Lower leg skin (tissue), 4 donors: ENCODE measurements at regions of chr14 and their contacts with region 1.

Region 1: DNA sequence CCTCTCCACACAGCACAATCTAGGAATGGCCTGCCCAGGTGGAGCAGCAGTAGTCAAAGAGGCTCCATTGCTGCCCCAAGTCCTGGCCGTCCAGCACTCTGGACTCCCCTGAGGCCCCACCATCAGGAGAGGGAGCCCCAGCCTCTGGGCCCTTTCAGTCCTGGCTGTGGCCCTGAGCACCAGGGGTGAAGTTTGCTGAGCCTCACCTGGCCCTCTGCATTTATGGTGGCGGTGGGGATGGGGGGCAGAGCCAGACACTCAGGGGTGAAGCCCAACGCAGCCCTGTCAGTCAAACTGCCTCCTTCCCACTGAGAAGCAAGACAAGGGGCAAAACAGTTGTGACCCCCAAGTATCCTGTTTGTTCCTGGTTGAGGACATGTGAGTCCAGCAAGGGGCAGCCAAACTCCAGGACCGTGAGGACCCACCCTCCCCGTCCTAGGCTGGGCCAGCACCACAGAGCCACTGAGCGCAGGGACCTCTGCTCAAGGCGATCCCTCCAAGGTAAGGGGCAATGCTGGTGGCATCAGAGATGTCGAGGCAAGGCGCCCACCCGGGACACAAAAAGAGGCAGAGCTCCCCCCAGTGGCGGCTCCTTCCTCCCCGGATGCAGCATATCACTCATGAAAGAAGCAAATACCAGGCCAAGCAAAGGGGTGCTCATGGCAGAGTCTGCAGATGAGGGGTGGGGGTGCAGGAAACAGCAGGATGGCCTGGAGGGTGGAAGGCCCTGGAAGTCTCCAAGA is 4.8 kb upstream of the AMN start:
- DNase-seq: no peak
- H3K4me3 ChIP-seq: no peak overlapping the region
- CTCF ChIP-seq: no peak
- POLR2A ChIP-seq: no peak

Region 2: DNA sequence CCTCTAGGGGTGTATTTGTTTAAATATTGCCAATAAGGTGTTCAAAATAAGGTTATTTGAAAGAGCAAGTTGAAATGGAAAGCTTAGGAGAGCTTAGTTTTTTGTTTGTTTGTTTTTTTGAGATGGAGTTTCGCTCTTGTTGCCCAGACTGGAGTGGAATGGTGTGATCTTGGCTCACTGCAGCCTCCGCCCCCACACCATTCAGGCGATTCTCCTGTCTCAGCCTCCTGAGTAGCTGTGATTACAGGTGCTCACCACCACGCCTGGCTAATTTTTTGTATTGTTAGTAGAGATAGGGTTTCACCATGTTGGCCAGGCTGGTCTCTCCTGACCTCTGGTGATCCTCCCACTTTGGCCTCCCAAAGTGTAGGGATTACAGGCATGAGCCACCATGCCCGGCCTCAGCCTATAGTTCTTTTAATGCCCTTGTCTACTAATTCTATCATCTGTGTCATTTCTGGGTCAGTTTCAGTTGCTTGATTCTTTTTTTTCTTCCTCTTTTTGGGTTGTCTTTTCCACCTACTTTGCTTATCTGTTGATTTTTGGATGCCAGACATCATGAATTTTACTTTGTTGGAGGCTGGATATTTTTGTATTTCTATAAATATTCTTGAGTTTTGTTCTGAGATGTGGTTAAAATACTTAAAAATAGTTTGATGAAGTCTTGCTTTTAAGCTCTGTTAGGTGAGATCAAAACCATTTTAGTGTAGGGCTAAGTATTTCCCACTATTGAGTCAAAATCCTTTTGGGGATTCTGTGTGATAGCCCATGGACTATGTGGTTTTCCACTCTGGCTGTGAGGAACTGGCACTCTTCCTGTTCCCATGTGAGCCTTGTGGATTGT is 306.4 kb before region 1 on chr14:
- intact Hi-C with region 1: loop called (anchors 10 kb)
- DNase-seq: no peak
- H3K4me3 ChIP-seq: no peak overlapping the region
- CTCF ChIP-seq: no peak
- POLR2A ChIP-seq: no peak

Region 3: GRCh38 chr14:102811251-102811881 is 106.3 kb before region 1 on chr14:
- intact Hi-C with region 1: no loop called
- DNase-seq: no peak
- H3K4me3 ChIP-seq: no peak overlapping the region
- CTCF ChIP-seq: no peak
- POLR2A ChIP-seq: no peak

Region 4: GRCh38 chr14:103067233-103067954 is 149.8 kb after region 1 on chr14:
- intact Hi-C with region 1: no loop called
- DNase-seq: no peak
- H3K4me3 ChIP-seq: no peak overlapping the region
- CTCF ChIP-seq: no peak
- POLR2A ChIP-seq: no peak